H1 (cell line): ENCODE measurements at regions of chr13 and their contacts with region 1.

Region 1: DNA sequence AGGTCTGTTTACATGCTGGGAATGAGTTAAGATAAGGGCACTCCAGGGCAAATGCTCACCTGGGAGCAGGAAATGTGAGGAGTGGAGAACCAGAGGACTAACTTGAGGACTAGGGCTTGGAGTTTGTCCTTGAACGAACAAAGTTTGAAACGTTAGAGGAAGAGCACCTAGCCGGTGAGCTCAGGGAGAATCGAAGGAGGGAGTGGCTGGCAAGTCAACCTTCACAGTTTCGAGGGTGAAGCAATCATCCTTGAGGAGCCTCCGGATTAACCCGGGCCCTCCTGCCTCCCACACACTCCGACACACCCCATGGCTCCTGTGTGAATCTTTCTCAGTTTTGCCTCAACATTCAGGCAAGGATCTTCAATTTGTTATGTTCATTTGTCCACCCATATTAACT is 58.6 kb downstream of the LMO7 start:
- DNase-seq: no peak
- H3K4me3 ChIP-seq: no peak overlapping the region
- H3K27ac ChIP-seq: no peak overlapping the region
- H3K4me1 ChIP-seq: no peaks in the 10 kb centered on the region
- H3K27me3 ChIP-seq: no peaks in the 10 kb centered on the region
- CTCF ChIP-seq: no peak
- EP300 ChIP-seq: no peak
- POLR2A ChIP-seq: no peak
- RAD21 ChIP-seq: no peak

Region 2: DNA sequence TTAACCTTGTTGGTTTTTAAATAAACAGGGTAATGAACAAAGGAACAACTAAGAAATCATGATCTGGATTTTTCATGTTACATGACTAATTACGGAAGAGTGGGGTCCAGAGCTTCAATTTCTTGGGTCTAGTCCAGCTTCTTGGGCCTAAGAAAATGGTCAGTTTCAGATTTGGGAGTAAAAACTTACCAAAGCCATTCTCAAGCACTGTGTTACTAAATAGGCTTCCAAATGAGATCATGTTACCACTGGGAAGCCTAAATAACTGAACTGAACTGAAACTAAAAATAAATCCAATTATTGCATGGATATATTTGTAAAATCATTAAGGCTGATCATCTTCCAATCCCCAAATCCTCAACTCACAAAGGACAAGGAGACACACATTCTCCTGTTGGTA is 226.6 kb before region 1 on chr13:
- CTCF ChIA-PET with region 1: no interaction called
- POLR2A ChIA-PET with region 1: no interaction called
- DNase-seq: no peak
- H3K4me3 ChIP-seq: no peak overlapping the region
- H3K27ac ChIP-seq: no peak overlapping the region
- H3K4me1 ChIP-seq: peaks cover 0 to 10% (median 3%) of the 10 kb centered on the region in 4 experiments; a peak in 3 of 7 replicates
- H3K27me3 ChIP-seq: no peaks in the 10 kb centered on the region
- CTCF ChIP-seq: no peak
- EP300 ChIP-seq: no peak
- POLR2A ChIP-seq: no peak
- RAD21 ChIP-seq: no peak

Region 3: DNA sequence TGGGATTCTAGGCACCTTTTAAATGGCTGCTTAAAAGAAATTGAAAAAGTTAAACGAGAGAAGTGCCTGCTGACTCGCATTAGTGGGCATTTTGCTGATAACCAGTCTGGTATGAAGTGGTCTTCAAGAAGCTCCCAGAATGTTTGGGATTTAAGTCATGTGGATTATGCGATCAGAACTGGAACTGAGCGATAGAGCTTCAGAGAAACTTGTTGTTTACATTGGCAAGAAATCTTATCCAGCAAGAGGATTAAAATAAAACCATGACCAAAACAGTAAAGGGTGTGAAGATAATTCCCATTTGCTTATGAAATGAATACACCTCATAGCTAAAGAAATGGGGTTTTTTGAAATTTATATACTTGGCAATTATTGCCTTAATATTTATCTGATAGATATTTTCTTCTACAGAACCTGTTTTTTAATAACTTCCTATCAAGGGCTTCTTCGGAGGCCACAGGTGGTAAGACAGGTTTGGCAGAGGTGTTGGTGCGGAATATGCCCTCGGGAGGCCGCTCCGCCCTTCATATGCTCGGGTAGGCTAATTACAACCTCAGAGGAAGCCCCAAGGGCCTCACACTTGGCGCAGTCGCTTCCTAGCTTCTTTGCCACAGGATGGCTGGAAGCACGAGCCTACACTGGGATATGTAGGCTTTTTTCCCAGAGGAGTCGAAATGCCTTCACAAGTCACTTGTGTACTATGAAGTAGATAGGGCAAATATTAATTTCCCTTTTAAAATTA is 10.0 kb after region 1 on chr13:
- CTCF ChIA-PET with region 1: interaction called, 19 read pairs
- POLR2A ChIA-PET with region 1: no interaction called
- DNase-seq: no peak
- H3K4me3 ChIP-seq: no peak overlapping the region
- H3K27ac ChIP-seq: no peak overlapping the region
- H3K4me1 ChIP-seq: peaks cover 0 to 3% (median 0%) of the 10 kb centered on the region in 4 experiments; a peak in 1 of 7 replicates
- H3K27me3 ChIP-seq: no peaks in the 10 kb centered on the region
- CTCF ChIP-seq: peak in 1 of 3 experiments; percentile 15; a peak in 1 of 4 replicates
- EP300 ChIP-seq: no peak
- POLR2A ChIP-seq: no peak
- RAD21 ChIP-seq: peak; percentile 7 to 29; a peak in 3 of 4 replicates

Region 4: DNA sequence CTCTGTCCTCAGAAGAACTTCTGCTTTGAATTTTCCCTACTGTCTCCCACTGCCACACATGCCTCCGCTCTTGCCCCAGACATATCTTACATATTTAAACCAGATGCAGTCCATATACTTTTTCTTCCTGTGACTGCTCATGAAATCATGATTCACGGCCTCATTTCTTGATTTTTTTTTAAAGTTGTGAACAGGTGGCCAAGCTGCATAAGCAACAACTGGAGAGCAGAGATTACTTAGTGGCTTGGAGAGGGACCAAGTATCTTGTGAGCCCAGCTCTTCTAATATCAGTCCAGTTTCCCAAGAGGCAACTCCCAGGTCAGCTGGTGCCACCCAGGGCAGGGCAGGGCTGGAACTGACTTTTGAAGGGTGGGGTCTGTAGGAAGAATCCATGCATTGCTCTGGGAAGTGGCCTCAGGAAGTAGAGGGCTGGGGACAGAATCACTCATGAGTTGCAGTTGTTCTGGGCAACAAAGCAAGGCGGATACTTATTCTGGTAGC is 93.8 kb after region 1 on chr13:
- CTCF ChIA-PET with region 1: interaction called, 13 read pairs
- POLR2A ChIA-PET with region 1: no interaction called
- DNase-seq: no peak
- H3K4me3 ChIP-seq: no peak overlapping the region
- H3K27ac ChIP-seq: no peak overlapping the region
- H3K4me1 ChIP-seq: peaks cover 0 to 3% (median 0%) of the 10 kb centered on the region in 4 experiments; a peak in 2 of 7 replicates
- H3K27me3 ChIP-seq: no peaks in the 10 kb centered on the region
- CTCF ChIP-seq: no peak
- EP300 ChIP-seq: no peak
- POLR2A ChIP-seq: no peak
- RAD21 ChIP-seq: no peak

Region 5: GRCh38 chr13:75876360-75877050 is 181.8 kb after region 1 on chr13:
- CTCF ChIA-PET with region 1: interaction called, 128 read pairs
- POLR2A ChIA-PET with region 1: no interaction called
- DNase-seq: peak; percentile 27 to 70
- H3K4me3 ChIP-seq: no peak overlapping the region
- H3K27ac ChIP-seq: no peak overlapping the region
- H3K4me1 ChIP-seq: peaks cover 0 to 13% (median 2%) of the 10 kb centered on the region in 4 experiments; a peak in 3 of 7 replicates
- H3K27me3 ChIP-seq: no peaks in the 10 kb centered on the region
- CTCF ChIP-seq: peak; percentile 70 to 86 (median 82)
- EP300 ChIP-seq: no peak
- POLR2A ChIP-seq: no peak
- RAD21 ChIP-seq: peak; percentile 92 to 94

Region 6: DNA sequence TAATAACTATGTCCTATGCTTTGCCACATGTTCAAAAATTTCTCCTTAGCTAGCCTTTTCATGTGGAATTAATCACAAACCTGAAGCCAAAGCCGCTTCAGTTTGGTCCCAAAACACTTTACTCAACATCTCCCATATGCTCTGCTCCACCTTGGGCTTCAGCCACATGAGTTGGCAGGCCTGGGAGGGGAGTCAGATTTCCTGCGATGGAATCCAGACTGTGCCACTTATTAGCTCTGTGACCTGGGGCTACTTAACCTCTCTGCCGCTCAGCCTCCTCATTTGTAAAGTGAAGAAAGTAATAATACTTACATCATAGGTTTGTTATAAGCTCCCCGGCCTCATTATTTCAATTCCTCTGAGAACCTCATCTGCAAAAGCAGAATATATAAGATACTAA is 213.4 kb after region 1 on chr13:
- CTCF ChIA-PET with region 1: interaction called, 13 read pairs
- POLR2A ChIA-PET with region 1: no interaction called
- DNase-seq: no peak
- H3K4me3 ChIP-seq: no peak overlapping the region
- H3K27ac ChIP-seq: no peak overlapping the region
- H3K4me1 ChIP-seq: no peaks in the 10 kb centered on the region
- H3K27me3 ChIP-seq: no peaks in the 10 kb centered on the region
- CTCF ChIP-seq: no peak
- EP300 ChIP-seq: no peak
- POLR2A ChIP-seq: no peak
- RAD21 ChIP-seq: no peak